IMR-90 (cell line): ENCODE measurements at regions of chr11 and their contacts with region 1.

Region 1: DNA sequence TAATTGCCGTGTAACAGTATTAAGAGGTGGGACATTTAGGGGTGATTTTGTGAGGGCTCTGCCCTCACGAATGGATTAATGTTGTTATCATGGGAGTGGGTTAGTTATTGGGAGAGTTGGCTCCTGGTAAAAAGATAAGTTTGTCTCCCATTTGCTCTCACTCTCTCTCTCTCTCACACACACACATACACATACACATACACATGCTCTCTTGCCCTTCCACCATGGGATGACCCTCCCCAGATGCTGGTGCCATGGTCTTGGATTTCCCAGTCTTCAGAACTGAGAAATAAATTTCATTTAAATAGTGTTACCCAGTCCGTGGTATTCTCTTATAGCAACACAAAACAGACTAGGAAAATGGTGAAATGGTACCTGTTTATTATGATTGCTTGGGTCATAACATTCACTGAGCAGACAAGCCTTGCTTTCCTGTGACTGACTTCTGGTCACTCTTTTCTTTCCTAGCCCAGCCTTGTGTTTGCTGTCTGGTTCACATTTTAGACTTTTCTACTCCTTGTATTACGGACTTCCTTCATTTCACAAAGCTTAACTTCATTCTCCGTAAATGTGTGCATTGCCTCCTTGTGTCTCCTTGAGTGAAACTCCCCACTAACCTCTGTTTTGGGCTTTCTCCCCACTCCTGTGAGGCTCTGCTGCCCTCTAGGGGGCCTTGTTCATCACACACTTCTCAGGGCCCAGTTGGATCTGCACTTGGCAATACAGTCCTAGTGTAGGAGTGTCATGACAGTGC is 206.5 kb upstream of the CTSC start:
- DNase-seq: peak; percentile 91
- ATAC-seq: peak; percentile 100
- H3K4me3 ChIP-seq: no peak overlapping the region
- H3K27ac ChIP-seq: peak overlapping the region; percentile 28; the same call in 1 of the 2 replicates
- H3K4me1 ChIP-seq: peaks cover 2% of the 10 kb centered on the region; the same call in 1 of the 2 replicates
- H3K27me3 ChIP-seq: no peaks in the 10 kb centered on the region
- CTCF ChIP-seq: peak; percentile 100; the same call in 1 of the 2 replicates
- POLR2A ChIP-seq: peak; percentile 62; the same call in 1 of the 2 replicates
- RAD21 ChIP-seq: peak; percentile 100

Region 2: DNA sequence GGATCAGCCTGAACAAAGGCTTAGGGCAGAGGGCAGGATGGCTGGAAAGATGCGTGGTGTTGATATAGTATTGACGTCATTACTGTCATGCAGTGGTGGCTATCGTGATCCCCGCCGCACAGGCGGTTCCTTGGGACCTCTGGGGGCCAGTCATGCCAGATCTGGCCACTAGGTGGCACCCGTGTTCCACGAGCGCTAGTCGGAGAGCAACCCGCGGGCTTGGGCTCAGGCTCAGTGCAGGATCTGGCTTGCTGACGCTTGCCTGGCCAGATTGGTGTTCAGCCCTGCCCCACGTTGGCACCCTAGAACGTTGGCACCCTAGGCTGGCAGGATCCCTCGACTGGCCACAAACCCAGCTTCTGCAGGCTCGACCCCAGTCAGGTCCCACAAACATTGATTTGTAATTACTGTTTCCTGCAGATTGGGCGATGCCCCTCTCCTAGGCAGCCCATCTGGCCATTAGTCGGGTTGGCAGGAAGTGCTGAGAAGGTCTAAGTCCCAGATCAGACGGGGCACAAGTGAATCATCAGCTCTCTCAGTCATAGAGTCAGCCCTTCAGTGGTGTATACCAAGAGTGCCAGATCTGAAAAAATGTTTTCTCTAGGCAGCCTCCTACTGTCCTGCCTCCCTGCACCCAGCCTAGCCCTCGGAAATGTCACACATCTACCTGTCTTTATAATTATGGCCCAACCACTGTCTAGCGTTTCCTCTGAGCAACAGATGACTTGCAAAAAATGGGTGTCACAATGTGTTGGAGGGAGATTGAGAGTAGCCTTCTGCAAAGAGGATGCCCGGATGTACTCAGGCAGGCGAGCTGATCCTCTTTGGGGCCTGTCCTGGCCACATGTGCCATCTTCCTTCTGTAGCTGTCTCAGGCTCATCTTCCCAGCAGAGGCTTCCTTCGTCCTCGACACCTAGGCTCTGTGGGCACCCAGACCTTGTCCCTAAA is 1191.0 kb before region 1 on chr11:
- CTCF ChIA-PET with region 1: no interaction called
- POLR2A ChIA-PET with region 1: no interaction called
- dilution Hi-C with region 1: no loop called
- in situ Hi-C with region 1: loop called (anchors 5 kb)
- intact Hi-C with region 1: loop called (anchors 1 kb)
- DNase-seq: peak; percentile 64
- ATAC-seq: peak; percentile 99
- H3K4me3 ChIP-seq: no peak overlapping the region
- H3K27ac ChIP-seq: no peak overlapping the region
- H3K4me1 ChIP-seq: 0 out of 2 replicates have a peak, but pooled peaks cover 2% of the 10 kb centered on the region
- H3K27me3 ChIP-seq: no peaks in the 10 kb centered on the region; the same call in 1 of the 2 replicates
- CTCF ChIP-seq: peak; percentile 97
- POLR2A ChIP-seq: no peak
- RAD21 ChIP-seq: peak; percentile 98

Region 3: DNA sequence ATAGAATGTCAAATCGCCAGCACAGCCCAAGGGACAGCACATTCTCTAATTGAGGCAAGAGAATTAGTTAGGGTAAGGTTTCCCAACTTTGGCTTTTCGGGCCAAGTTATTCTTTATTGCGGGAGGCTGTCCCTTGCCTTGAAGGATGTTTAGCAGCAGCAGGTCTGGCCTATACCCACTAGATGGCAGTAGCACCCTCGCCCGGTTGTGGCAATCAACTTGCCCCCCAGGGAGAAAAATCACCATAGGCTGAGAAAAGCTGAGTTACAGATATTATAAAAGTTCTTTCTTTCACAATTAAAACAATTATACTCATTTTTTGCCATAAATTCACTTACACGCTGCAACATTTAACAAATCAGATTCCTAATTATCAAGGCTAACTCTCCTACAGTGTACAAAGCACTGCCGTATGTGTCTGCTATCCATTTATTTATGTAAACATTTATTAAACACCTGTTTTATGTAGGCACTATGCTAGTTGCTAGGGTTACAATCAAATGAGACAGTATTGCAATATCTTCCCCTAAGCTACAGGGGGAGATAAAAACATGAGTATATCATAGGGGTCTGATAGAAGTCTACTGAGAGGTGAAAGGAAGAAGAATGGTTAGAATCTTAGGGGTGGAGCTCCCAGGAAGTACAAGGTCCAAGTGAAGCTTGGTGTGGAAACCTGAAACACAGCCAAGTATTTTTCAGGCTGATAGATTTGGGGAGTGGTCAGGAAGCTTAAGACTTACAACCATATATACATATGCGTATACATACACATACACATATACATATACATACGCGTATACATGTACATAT is 821.1 kb before region 1 on chr11:
- CTCF ChIA-PET with region 1: no interaction called
- POLR2A ChIA-PET with region 1: no interaction called
- dilution Hi-C with region 1: no loop called
- in situ Hi-C with region 1: no loop called
- intact Hi-C with region 1: loop called (anchors 5 kb)
- DNase-seq: peak; percentile 2
- ATAC-seq: 0 out of 2 replicates have a peak, but pooled peaks have one; percentile 49
- H3K4me3 ChIP-seq: no peak overlapping the region
- H3K27ac ChIP-seq: no peak overlapping the region
- H3K4me1 ChIP-seq: no peaks in the 10 kb centered on the region
- H3K27me3 ChIP-seq: no peaks in the 10 kb centered on the region
- CTCF ChIP-seq: peak; percentile 51
- POLR2A ChIP-seq: no peak
- RAD21 ChIP-seq: peak; percentile 42

Region 4: GRCh38 chr11:88016392-88017170 is 527.5 kb before region 1 on chr11:
- CTCF ChIA-PET with region 1: interaction called, 38 read pairs
- POLR2A ChIA-PET with region 1: no interaction called
- dilution Hi-C with region 1: loop called (anchors 25 kb)
- in situ Hi-C with region 1: loop called (anchors 25 kb)
- intact Hi-C with region 1: loop called (anchors 1 kb)
- DNase-seq: peak; percentile 84
- ATAC-seq: peak; percentile 96
- H3K4me3 ChIP-seq: no peak overlapping the region
- H3K27ac ChIP-seq: no peak overlapping the region
- H3K4me1 ChIP-seq: no peaks in the 10 kb centered on the region
- H3K27me3 ChIP-seq: no peaks in the 10 kb centered on the region
- CTCF ChIP-seq: peak; percentile 89
- POLR2A ChIP-seq: no peak
- RAD21 ChIP-seq: peak; percentile 89

Region 5: DNA sequence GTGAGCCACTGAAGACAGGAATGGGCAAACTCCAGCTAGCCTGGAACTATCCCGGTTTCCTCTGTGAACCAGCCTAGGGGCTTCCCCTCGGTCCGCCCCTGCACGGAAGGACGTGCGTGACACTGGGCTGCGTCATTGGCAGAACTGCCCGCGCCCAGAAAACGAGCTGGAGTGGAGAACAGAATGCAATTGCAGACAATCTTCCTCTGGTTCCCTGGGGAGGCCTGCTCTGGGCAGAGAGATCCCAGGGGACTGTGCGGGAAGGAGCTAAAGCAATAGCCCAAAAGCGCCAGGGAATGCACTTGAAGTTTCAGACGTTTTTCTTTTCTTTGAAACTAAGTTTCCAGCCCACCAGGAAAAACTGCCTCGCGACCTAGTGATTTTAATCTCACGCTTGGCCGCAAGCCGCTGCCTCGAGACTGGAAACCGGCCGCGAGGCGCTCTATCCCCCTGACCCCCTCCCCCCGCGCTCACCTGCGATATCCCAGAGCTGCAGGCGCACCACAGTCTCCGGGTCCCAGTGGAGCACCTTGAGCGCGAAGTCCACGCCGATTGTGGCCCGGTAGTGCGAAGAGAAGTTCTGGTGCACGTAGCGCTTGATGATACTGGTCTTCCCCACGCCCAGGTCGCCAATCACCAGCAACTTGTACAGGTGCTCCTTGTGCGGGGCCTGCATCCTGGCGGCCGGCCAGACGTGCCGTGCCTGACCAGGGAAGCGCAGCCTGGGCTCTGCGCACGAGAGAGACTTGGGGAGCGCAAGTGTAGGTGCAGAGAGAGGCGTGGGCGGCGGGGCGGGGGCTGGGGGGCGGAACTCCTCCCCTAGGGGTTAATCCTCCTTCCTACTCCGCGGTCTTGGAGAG is 369.1 kb before region 1 on chr11 and contains the start of gene RAB38:
- CTCF ChIA-PET with region 1: no interaction called
- POLR2A ChIA-PET with region 1: no interaction called
- dilution Hi-C with region 1: no loop called
- in situ Hi-C with region 1: no loop called
- intact Hi-C with region 1: loop called (anchors 5 kb)
- DNase-seq: peak; percentile 86
- ATAC-seq: peak; percentile 85
- H3K4me3 ChIP-seq: peak within 1 kb of the TSS; percentile 46
- H3K27ac ChIP-seq: no peak within 1 kb of the TSS
- H3K4me1 ChIP-seq: peaks cover 2% of the 10 kb centered on the region; the same call in 1 of the 2 replicates
- H3K27me3 ChIP-seq: no peaks in the 10 kb centered on the region; the same call in none of the 2 replicates
- CTCF ChIP-seq: no peak
- POLR2A ChIP-seq: peak; percentile 66; the same call in 1 of the 2 replicates
- RAD21 ChIP-seq: no peak
- total RNA-seq, gene RAB38: 6.4 and 6.5 TPM in 2 replicates

Region 6: DNA sequence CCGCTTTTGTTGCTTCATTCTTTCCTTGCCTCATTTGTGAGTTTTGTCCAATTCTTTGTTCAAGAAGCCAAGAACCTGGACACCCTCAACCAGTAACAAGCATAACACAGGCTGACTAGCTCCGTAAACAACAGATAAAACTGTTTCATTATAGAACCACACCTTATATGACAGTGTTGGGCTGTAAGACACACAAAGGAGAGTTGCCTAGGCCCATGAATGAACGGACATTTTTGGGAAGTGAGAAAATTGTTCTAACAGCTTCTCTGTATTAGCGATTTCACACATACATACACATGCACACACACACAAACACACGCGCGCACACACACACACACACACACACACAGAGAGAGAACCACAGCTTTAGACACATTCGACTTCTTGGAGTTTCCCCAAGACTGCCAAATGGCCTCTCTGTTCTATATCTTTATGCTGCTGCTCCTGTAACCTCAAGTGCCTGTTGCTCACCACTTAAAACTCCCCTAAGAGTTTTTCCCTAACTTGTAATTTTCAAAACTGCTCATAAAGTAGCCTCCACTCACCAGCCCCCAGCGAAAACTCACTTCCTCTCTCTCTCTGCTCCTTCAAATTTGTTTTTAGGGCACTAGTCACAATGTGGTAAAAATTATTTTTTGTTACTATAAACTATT is 242.5 kb before region 1 on chr11:
- CTCF ChIA-PET with region 1: no interaction called
- POLR2A ChIA-PET with region 1: no interaction called
- dilution Hi-C with region 1: no loop called
- in situ Hi-C with region 1: loop called (anchors 25 kb)
- intact Hi-C with region 1: no loop called
- DNase-seq: peak; percentile 39
- ATAC-seq: no peak
- H3K4me3 ChIP-seq: no peak overlapping the region
- H3K27ac ChIP-seq: no peak overlapping the region
- H3K4me1 ChIP-seq: no peaks in the 10 kb centered on the region; the same call in 1 of the 2 replicates
- H3K27me3 ChIP-seq: no peaks in the 10 kb centered on the region
- CTCF ChIP-seq: no peak
- POLR2A ChIP-seq: no peak
- RAD21 ChIP-seq: no peak

Region 7: DNA sequence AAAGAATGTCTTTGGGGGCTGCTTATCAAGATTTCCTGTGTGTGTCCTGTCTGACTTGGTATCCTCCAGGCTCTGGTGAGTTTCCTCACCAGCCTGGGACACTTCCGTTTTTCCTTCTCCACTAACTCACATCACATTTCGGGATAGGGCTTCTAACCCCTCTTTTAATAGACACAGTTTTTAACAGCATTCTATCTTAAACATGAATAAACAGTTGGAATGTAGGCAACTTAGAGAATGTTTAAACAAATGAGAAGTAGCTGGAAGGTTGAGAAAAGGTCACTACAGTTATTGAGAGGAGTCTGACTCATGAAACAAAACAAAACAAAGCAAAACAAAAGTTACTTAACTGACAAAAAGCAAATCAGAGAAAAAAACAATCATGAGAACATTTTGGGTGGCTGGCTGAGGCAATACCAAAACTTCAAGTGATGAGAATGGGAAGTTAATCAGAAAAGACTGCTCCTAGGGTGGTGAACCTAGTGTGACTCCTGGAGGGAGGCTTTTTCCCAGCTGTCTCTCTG is 141.8 kb before region 1 on chr11:
- CTCF ChIA-PET with region 1: no interaction called
- POLR2A ChIA-PET with region 1: no interaction called
- dilution Hi-C with region 1: no loop called
- in situ Hi-C with region 1: no loop called
- intact Hi-C with region 1: loop called (anchors 2 kb)
- DNase-seq: peak; percentile 90
- ATAC-seq: peak; percentile 83
- H3K4me3 ChIP-seq: no peak overlapping the region
- H3K27ac ChIP-seq: peak overlapping the region; percentile 89; the same call in 1 of the 2 replicates
- H3K4me1 ChIP-seq: peaks cover 8% of the 10 kb centered on the region
- H3K27me3 ChIP-seq: no peaks in the 10 kb centered on the region
- CTCF ChIP-seq: no peak
- POLR2A ChIP-seq: no peak
- RAD21 ChIP-seq: no peak